ENCODE measurements at regions of chr20 and their contacts with region 1.

Region 1: GRCh38 chr20:47317127-47317895 is 39.2 kb downstream of the ZMYND8 start:
- DNase-seq: peak; percentile 100
- H3K4me3 ChIP-seq: no peak overlapping the region
- H3K27ac ChIP-seq: peak overlapping the region; percentile 95
- H3K4me1 ChIP-seq: peaks cover 69% of the 10 kb centered on the region
- H3K27me3 ChIP-seq: no peaks in the 10 kb centered on the region
- CTCF ChIP-seq: no peak

Region 2: DNA sequence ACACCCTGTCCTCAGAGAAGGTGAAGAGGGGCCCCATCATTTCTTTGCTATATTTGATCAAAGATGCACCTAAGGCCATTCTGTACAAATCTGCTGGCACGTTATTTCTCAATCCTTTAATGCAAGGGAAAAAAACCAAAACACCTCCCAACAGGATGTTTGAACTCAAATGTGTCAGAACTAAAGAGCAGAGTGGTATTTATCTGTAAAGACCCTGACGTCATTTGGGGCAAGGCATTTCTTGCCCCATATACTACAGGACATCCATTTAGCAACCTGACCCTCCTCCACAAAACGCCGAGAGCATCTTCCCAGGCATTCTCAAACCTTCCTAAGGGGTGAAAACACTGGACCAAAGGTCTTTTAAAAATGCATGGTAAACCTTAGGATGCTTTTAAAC is 11.6 kb before region 1 on chr20:
- CTCF ChIA-PET with region 1: no interaction called
- dilution Hi-C with region 1: no loop called
- in situ Hi-C with region 1: no loop called
- intact Hi-C with region 1: loop called (anchors 1 kb)
- DNase-seq: no peak
- H3K4me3 ChIP-seq: no peak overlapping the region
- H3K27ac ChIP-seq: no peak overlapping the region
- H3K4me1 ChIP-seq: peaks cover 6% of the 10 kb centered on the region
- H3K27me3 ChIP-seq: no peaks in the 10 kb centered on the region
- CTCF ChIP-seq: no peak

Region 3: DNA sequence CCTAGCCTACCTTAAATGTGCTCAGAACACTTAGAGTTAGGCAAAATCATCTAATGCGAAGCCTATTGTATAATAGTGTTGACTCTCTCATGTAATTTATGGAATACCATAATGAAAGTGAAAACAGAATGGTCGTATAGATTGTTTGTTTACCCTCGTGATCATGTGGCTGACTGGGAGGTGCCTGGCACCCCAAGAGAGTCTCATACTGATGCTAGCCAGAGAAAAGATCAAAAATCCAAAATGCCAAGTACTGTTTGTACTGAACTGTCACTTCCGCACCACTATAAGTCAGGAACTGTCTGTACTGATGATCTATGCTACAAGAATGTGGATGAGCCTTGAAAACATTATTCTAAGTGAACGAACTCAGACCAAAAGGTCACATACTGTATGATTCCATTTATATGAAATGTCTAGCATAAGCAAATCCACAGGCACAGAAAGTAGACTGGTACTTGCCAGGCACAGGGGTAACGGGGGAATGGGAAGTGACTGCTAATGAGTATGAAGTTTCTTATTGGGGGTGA is 16.8 kb after region 1 on chr20:
- CTCF ChIA-PET with region 1: no interaction called
- dilution Hi-C with region 1: no loop called
- in situ Hi-C with region 1: no loop called
- intact Hi-C with region 1: loop called (anchors 1 kb)
- DNase-seq: peak; percentile 94
- H3K4me3 ChIP-seq: peak overlapping the region in 1 of 3 experiments; percentile 41
- H3K27ac ChIP-seq: peak overlapping the region; percentile 81
- H3K4me1 ChIP-seq: peaks cover 68% of the 10 kb centered on the region
- H3K27me3 ChIP-seq: no peaks in the 10 kb centered on the region
- CTCF ChIP-seq: no peak

Region 4: DNA sequence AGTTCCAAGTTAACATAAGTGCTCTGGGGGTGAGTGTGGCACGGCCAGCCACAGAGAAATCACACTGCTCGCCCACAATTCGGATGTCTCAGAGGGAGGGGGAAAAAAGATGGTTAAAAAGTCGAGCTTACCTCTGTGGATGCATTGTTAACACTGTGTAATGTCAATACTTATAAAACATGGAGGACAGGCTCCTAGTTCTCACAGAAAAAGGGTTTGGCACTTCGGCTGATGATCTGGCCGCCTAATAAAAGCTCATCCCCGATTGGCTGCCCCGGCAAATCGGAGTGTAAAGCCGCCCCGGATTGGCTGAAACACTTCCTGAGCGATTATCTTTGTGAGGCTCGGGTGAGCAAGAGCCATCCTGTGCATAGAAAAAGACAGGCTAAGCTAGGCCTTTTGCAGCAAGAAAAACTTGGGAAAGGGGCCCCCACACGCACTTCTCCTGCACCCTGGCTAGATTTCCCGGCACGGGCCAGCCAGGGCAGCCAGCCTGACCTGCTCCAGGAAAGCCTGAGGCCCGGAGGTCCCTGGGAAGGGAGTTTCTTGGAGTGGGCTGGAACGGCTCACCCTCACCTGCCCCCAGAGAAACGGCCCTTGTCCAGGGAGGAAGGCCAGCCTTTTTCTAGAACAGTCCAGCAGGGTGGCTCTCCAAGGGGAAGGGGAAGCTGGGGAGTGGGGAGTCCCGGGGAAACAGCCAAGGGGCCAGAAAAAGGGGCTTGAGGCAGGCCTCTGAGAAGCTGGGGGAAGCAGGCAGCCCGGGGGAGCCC is 39.4 kb after region 1 on chr20 and contains the start of gene ZMYND8:
- CTCF ChIA-PET with region 1: interaction called, 9 read pairs
- dilution Hi-C with region 1: loop called (anchors 5 kb)
- in situ Hi-C with region 1: no loop called
- intact Hi-C with region 1: loop called (anchors 1 kb)
- DNase-seq: peak; percentile 95
- H3K4me3 ChIP-seq: peak within 1 kb of the TSS; percentile 36 to 46 (median 45)
- H3K27ac ChIP-seq: peak within 1 kb of the TSS; percentile 94
- H3K4me1 ChIP-seq: peaks cover 98% of the 10 kb centered on the region
- H3K27me3 ChIP-seq: no peaks in the 10 kb centered on the region
- CTCF ChIP-seq: no peak
- total RNA-seq, gene ZMYND8: 18.7 to 59.6 TPM

Region 5: DNA sequence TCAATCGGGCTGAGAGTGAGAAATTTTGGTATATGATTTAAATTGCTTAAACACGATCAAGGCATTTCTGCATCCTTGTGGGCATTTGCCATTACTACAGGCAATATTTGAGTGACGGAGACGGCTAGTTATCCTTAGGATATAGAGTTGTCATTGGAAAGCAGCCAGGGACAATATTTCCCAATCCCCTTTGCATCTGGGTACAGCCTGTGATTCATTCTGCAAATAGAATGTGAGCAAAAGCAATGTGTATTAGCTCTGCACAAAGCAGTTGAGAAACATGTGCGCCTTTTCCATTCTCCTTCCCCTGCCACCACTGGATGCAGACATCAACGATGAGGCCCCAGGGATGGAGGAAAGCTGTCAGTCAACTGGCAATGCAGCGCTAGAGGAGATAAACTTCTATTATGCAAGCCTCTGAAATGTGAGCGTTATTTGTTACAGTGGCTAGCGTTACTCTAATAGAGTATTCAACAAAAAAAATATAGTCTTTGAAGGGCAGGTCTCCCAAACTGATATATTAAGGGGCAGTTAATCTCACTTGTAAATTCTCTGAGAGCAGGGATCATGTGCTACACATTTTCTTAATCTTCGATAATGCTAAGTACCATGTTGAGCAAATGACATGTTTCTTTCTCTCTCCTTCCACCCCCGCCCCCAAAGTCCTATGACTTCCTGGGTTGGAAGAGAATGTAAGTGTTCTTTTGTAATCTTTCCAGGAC is 147.2 kb after region 1 on chr20:
- CTCF ChIA-PET with region 1: no interaction called
- dilution Hi-C with region 1: no loop called
- in situ Hi-C with region 1: no loop called
- intact Hi-C with region 1: loop called (anchors 5 kb)
- DNase-seq: peak; percentile 96
- H3K4me3 ChIP-seq: no peak overlapping the region
- H3K27ac ChIP-seq: peak overlapping the region; percentile 38
- H3K4me1 ChIP-seq: peaks cover 20% of the 10 kb centered on the region
- H3K27me3 ChIP-seq: no peaks in the 10 kb centered on the region
- CTCF ChIP-seq: peak; percentile 56 to 59